ENCODE measurements at regions of chr14 and their contacts with region 1.

Region 1: GRCh38 chr14:91911474-91912032 is 35.9 kb downstream of the FBLN5 start:
- ATAC-seq: peak in 6 of 8 experiments; percentile 36 to 87 (median 68)
- H3K4me3 ChIP-seq: no peak overlapping the region
- H3K27ac ChIP-seq: no peak overlapping the region
- H3K4me1 ChIP-seq: no peaks in the 10 kb centered on the region

Region 2: DNA sequence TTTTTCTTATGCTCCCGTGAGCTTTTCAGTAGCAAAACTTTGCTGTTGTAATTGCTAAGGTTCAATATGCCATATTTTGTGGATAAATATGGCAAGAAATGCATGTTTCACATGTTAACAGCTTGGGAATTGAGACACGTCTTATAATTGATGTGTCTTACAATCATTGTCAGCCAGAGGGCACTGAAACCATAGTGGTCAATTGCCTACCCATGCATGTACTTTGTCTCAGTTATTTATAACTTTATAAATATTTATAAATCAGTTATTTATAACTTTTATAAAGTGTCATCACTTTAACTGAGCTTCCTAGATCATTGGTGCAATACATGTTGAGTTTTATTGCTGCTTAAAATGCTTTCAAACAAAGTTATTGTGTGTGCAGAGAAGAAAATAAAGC is 261.6 kb before region 1 on chr14:
- in situ Hi-C with region 1: loop called in 1 of 9 experiments (anchors 25 kb)
- ATAC-seq: peak in 3 of 8 experiments; percentile 54 to 74 (median 72)
- H3K4me3 ChIP-seq: no peak overlapping the region
- H3K27ac ChIP-seq: no peak overlapping the region
- H3K4me1 ChIP-seq: no peaks in the 10 kb centered on the region